ENCODE measurements at regions of chr3 and their contacts with region 1.

Region 1: DNA sequence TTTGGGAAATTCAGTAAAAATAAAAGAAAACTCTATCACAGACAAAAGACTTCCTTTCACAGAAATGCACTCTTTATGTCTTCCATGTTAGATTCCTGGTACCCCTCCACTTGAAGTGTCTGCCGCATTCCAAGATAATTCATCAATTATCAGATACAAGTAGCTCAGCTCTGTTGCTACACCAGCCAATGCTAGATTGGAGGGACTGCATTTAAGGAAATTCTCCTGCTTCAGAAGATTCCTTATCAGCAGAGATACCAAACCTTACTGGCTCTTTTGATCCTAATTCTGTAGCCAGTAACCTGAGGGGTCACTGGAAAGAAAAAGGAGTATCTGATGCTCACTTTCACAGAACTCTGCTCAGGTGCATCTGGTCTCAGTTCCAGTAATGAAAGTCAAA is 63.9 kb downstream of the TM4SF4 start:
- DNase-seq: no peak
- ATAC-seq: no peak
- H3K4me3 ChIP-seq: no peak overlapping the region
- H3K4me3 Mint-ChIP-seq: no peak overlapping the region
- H3K27ac ChIP-seq: no peak overlapping the region
- H3K27ac Mint-ChIP-seq: no peak overlapping the region
- H3K4me1 ChIP-seq: no peaks in the 10 kb centered on the region
- H3K4me1 Mint-ChIP-seq: no peaks in the 10 kb centered on the region
- H3K27me3 ChIP-seq: no peaks in the 10 kb centered on the region
- H3K27me3 Mint-ChIP-seq: no peaks in the 10 kb centered on the region
- CTCF ChIP-seq: no peak

Region 2: DNA sequence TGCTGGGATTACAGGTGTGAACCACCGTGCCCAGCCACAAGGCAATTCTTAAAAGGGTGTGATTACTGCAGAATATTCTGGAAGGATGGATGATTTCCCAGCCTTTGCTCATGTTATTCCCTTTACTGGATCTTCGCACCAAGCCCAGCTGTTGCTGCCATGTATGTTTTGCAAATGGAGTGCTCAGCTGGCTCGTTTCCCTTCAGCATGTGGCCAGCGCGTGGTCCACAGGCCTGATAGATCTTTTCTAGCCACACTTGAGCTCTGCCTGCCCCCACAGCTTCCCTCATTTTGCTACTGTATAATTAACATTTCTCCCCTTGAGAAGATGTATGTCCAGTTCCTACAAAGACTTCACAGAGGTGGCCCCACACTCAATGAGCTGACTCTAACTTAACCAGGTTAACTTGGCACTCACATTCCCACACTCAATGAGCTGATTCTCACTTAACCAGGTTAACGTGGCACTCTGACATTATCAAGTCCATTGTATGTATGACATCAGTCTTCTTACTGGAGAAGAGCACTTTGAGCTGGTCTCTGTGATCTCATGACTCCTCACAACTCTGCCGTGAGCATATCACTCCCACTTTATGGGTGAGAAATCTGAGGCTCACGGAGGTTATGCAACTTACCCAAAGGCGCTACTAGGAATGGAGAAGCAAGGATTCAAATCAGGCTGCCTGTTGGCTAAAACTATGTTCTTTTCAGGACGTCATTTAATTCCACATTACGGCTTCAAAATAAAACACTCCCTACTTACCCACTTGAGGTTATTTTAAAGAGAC is 14.7 kb before region 1 on chr3:
- CTCF ChIA-PET with region 1: no interaction called
- POLR2A ChIA-PET with region 1: no interaction called
- intact Hi-C with region 1: loop called in 1 of 2 experiments (anchors 1 kb)
- DNase-seq: no peak
- ATAC-seq: no peak
- H3K4me3 ChIP-seq: no peak overlapping the region
- H3K4me3 Mint-ChIP-seq: no peak overlapping the region
- H3K27ac ChIP-seq: no peak overlapping the region
- H3K27ac Mint-ChIP-seq: no peak overlapping the region
- H3K4me1 ChIP-seq: no peaks in the 10 kb centered on the region
- H3K4me1 Mint-ChIP-seq: no peaks in the 10 kb centered on the region
- H3K27me3 ChIP-seq: no peaks in the 10 kb centered on the region
- H3K27me3 Mint-ChIP-seq: peaks cover 4% of the 10 kb centered on the region
- CTCF ChIP-seq: no peak

Region 3: GRCh38 chr3:149670742-149671492 is 132.5 kb after region 1 on chr3:
- CTCF ChIA-PET with region 1: no interaction called
- POLR2A ChIA-PET with region 1: no interaction called
- intact Hi-C with region 1: no loop called
- DNase-seq: no peak
- ATAC-seq: no peak
- H3K4me3 ChIP-seq: no peak overlapping the region
- H3K4me3 Mint-ChIP-seq: no peak overlapping the region
- H3K27ac ChIP-seq: no peak overlapping the region
- H3K27ac Mint-ChIP-seq: no peak overlapping the region
- H3K4me1 ChIP-seq: no peaks in the 10 kb centered on the region
- H3K4me1 Mint-ChIP-seq: no peaks in the 10 kb centered on the region
- H3K27me3 ChIP-seq: peaks cover 0 to 3% of the 10 kb centered on the region in 2 experiments
- H3K27me3 Mint-ChIP-seq: peaks cover 17% of the 10 kb centered on the region
- CTCF ChIP-seq: no peak

Measured in CD4-positive, alpha-beta T cell (primary cell).